Activated CD8-positive, alpha-beta T cell treated with anti-CD3 and anti-CD28 coated beads for 36 hours (primary cell): ENCODE measurements at regions of chr19 and their contacts with region 1.

Region 1: DNA sequence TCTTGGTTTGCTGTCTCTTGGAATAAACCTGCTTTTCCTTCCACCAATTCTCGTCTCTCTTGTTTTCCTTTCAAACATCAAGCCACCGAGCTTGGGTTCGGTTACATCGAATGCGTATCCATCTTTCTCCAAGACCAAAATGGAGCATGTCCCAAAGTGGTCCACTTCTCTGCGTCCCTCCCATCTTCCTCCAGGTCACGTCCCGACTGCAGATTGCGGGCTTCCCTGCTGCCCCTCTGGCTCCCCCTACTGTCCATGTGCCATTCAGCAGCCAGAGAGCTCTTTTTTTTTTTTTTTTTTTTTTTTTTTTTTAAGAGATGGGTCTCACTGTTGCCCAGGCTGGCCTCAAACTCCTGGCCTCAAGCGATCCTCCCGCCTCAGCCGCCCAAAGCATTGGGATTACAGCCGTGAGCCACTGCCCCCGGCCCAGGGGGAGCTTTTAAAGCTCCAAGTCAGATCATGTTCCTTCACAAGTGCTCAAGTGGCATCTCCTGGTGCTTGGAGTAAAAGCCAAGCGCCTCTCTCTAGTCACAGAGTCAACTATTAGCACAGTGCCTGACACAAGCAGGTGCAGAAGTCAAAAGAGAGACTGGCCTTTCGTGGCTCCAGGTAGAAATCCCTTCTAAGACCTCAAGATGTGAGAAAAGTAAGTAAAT is 10.0 kb downstream of the COL5A3 start:
- DNase-seq: peak; percentile 82
- ATAC-seq: peak; percentile 71
- H3K4me3 Mint-ChIP-seq: no peak overlapping the region
- H3K27ac Mint-ChIP-seq: no peak overlapping the region
- H3K4me1 Mint-ChIP-seq: peaks cover 11% of the 10 kb centered on the region
- H3K27me3 Mint-ChIP-seq: peaks cover 28% of the 10 kb centered on the region
- CTCF ChIP-seq: peak; percentile 87

Region 2: GRCh38 chr19:9877775-9878510 is 122.4 kb before region 1 on chr19:
- CTCF ChIA-PET with region 1: no interaction called
- POLR2A ChIA-PET with region 1: no interaction called
- intact Hi-C with region 1: no loop called
- DNase-seq: no peak
- ATAC-seq: no peak
- H3K4me3 Mint-ChIP-seq: no peak overlapping the region
- H3K27ac Mint-ChIP-seq: no peak overlapping the region
- H3K4me1 Mint-ChIP-seq: no peaks in the 10 kb centered on the region
- H3K27me3 Mint-ChIP-seq: no peaks in the 10 kb centered on the region
- CTCF ChIP-seq: no peak

Region 3: DNA sequence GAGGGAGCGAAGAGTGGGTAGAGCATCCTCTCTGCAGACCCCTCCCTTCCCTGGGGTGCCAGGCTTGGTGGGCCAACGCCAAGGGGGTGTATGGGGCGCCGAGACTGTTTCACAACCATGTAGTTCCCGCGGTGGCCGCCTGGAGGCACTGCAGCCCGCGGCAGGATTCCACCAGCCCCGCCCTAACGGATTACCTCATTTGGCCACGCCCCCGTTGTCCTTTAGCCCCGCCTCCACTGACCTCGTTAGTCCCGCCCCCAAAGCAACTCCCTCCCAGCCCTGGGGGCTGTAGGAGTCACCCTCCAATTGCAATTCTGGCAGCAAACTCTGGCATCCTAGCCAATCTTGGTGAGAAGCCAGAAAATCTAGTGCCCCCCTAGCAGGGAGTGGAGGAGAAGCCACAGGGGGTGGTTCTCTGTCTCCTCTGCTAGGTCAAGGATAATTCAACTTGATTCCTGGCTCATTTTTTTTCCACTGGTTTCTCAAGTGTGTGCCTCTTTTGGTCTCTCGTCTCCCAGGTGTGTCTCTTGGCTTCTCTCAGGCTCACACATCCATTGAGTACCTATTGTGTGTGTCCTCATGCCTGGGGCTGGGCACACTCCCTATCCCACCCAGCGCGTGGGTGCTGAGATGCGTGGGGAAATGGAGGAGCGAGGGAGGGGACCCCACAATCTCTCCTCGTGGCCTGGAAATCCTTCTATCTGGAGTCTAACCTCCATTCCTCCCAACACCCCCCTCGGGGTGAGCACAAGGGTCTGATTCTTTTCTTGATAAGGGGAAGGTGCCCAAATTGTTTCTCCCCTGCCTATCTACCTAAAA is 66.0 kb before region 1 on chr19:
- CTCF ChIA-PET with region 1: interaction called, 33 read pairs
- POLR2A ChIA-PET with region 1: no interaction called
- intact Hi-C with region 1: loop called (anchors 5 kb)
- DNase-seq: peak; percentile 93
- ATAC-seq: peak; percentile 95
- H3K4me3 Mint-ChIP-seq: no peak overlapping the region
- H3K27ac Mint-ChIP-seq: no peak overlapping the region
- H3K4me1 Mint-ChIP-seq: peaks cover 24% of the 10 kb centered on the region
- H3K27me3 Mint-ChIP-seq: peaks cover 49% of the 10 kb centered on the region
- CTCF ChIP-seq: peak; percentile 96

Region 4: DNA sequence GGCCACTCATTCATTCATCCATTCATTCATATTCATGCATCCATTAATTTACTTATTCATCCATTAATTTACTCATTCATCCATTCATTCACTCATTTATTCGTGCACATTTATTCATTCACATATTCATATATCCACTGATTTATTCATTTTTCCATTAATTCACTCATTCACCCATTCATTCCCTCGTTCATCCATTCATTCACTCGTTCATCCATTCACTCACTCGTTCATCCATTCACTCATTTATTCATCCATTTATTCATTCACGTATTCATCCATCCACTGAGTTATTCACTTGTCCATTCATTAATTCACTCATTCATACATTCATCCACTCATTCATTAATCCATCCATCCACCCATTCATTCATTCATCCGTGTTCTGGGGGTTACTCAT is 28.2 kb before region 1 on chr19:
- CTCF ChIA-PET with region 1: no interaction called
- POLR2A ChIA-PET with region 1: no interaction called
- intact Hi-C with region 1: no loop called
- DNase-seq: no peak
- ATAC-seq: no peak
- H3K4me3 Mint-ChIP-seq: no peak overlapping the region
- H3K27ac Mint-ChIP-seq: no peak overlapping the region
- H3K4me1 Mint-ChIP-seq: no peaks in the 10 kb centered on the region
- H3K27me3 Mint-ChIP-seq: peaks cover 17% of the 10 kb centered on the region
- CTCF ChIP-seq: no peak

Region 5: GRCh38 chr19:10018263-10018662 is 18.0 kb after region 1 on chr19:
- CTCF ChIA-PET with region 1: interaction called, 11 read pairs
- POLR2A ChIA-PET with region 1: no interaction called
- intact Hi-C with region 1: no loop called
- DNase-seq: no peak
- ATAC-seq: no peak
- H3K4me3 Mint-ChIP-seq: no peak overlapping the region
- H3K27ac Mint-ChIP-seq: no peak overlapping the region
- H3K4me1 Mint-ChIP-seq: no peaks in the 10 kb centered on the region
- H3K27me3 Mint-ChIP-seq: peaks cover 9% of the 10 kb centered on the region
- CTCF ChIP-seq: no peak

Region 6: GRCh38 chr19:10036601-10037071 is 36.3 kb after region 1 on chr19:
- CTCF ChIA-PET with region 1: no interaction called
- POLR2A ChIA-PET with region 1: no interaction called
- intact Hi-C with region 1: no loop called
- DNase-seq: no peak
- ATAC-seq: no peak
- H3K4me3 Mint-ChIP-seq: no peak overlapping the region
- H3K27ac Mint-ChIP-seq: no peak overlapping the region
- H3K4me1 Mint-ChIP-seq: no peaks in the 10 kb centered on the region
- H3K27me3 Mint-ChIP-seq: peaks cover 19% of the 10 kb centered on the region
- CTCF ChIP-seq: no peak